Caco-2 (cell line): ENCODE measurements at regions of chr12 and their contacts with region 1.

Region 1: DNA sequence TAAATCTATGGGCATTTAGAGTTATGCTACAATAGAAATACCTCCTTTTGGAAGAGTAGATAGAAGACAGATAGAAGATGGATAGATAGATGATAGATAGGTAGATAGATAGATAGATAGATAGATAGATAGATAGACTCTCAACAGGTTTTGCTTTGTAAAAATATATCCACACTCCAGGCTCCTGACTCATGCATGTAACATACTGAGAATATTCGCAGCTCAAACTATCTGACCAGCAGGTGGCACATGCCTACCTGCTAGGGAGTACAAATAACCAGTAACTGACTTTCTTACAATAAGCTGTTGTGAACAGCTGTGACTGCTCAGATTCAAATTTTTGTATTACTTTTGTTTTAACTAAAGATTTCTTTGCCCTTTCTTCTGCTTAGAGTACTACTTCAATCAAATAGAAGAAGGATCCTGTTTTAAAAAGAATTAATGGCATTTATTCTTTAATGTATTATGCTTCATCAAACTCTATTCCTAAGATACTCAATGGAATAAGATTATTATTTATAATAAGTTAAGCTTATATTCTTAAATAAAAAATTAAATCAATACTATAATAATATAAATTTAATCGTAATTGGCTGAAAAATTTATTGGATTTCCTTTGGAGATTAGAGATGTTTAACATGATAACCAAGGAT is 15.8 kb upstream of the CPNE8 start:
- DNase-seq: peak; percentile 70
- H3K4me3 ChIP-seq: no peak overlapping the region
- H3K4me3 Mint-ChIP-seq: no peak overlapping the region
- H3K27ac Mint-ChIP-seq: no peak overlapping the region
- H3K4me1 ChIP-seq: no peaks in the 10 kb centered on the region
- H3K4me1 Mint-ChIP-seq: no peaks in the 10 kb centered on the region
- H3K27me3 ChIP-seq: no peaks in the 10 kb centered on the region
- H3K27me3 Mint-ChIP-seq: peaks cover 2% of the 10 kb centered on the region
- CTCF ChIP-seq: peak; percentile 72 to 89

Region 2: DNA sequence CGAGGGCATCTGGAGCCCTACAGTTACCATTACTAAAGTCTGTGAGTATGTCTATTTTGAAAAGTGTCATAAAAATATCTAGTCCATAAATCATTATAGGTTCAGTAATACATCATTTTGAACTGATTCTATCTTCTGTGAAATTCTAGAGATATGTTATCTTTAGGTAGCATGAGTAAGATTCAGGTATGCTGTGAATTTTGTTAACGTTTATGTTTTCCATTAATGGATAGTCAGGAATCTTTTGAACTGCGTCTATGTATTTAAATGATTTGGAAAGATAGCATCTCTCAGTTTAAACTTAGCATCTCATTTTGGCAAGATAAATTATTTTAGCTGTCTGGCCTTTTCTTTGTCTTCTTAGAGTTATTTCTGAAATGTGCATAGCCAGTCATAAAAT is 596.3 kb before region 1 on chr12:
- CTCF ChIA-PET with region 1: no interaction called
- POLR2A ChIA-PET with region 1: no interaction called
- intact Hi-C with region 1: loop called (anchors 5 kb)
- DNase-seq: peak in 1 of 2 experiments; percentile 13
- H3K4me3 ChIP-seq: no peak overlapping the region
- H3K4me3 Mint-ChIP-seq: no peak overlapping the region
- H3K27ac Mint-ChIP-seq: no peak overlapping the region
- H3K4me1 ChIP-seq: peaks cover 10% of the 10 kb centered on the region; the same call in 1 of the 2 replicates
- H3K4me1 Mint-ChIP-seq: peaks cover 9% of the 10 kb centered on the region
- H3K27me3 ChIP-seq: no peaks in the 10 kb centered on the region
- H3K27me3 Mint-ChIP-seq: no peaks in the 10 kb centered on the region
- CTCF ChIP-seq: no peak

Region 3: GRCh38 chr12:39003541-39004155 is 82.5 kb after region 1 on chr12:
- CTCF ChIA-PET with region 1: interaction called, 4 read pairs
- POLR2A ChIA-PET with region 1: no interaction called
- intact Hi-C with region 1: loop called (anchors 1 kb)
- DNase-seq: no peak
- H3K4me3 ChIP-seq: no peak overlapping the region
- H3K4me3 Mint-ChIP-seq: no peak overlapping the region
- H3K27ac Mint-ChIP-seq: no peak overlapping the region
- H3K4me1 ChIP-seq: no peaks in the 10 kb centered on the region
- H3K4me1 Mint-ChIP-seq: no peaks in the 10 kb centered on the region
- H3K27me3 ChIP-seq: no peaks in the 10 kb centered on the region
- H3K27me3 Mint-ChIP-seq: peaks cover 3% of the 10 kb centered on the region
- CTCF ChIP-seq: peak in 1 of 2 experiments; percentile 13

Region 4: DNA sequence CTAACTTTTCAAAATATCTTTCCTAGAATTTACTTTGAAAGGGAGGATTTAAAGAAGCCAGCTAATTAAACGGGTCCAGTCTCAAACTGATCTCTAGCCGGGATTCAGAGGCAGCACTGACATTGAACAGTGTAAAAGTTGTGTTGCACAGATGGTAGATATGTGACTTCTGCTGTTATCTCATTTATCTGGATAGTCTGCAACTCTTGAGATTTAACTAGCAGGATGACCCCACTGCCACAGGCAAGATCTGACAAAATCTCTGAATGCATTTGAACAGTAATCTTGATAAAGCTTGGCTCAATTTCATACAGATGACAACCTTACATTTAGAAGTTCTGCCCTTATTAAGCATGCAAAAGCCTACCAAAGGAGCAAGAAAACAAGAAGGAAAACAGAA is 122.3 kb after region 1 on chr12:
- CTCF ChIA-PET with region 1: no interaction called
- POLR2A ChIA-PET with region 1: no interaction called
- intact Hi-C with region 1: loop called (anchors 5 kb)
- DNase-seq: no peak
- H3K4me3 ChIP-seq: no peak overlapping the region
- H3K4me3 Mint-ChIP-seq: no peak overlapping the region
- H3K27ac Mint-ChIP-seq: no peak overlapping the region
- H3K4me1 ChIP-seq: 0 out of 2 replicates have a peak, but pooled peaks cover 9% of the 10 kb centered on the region
- H3K4me1 Mint-ChIP-seq: peaks cover 6% of the 10 kb centered on the region
- H3K27me3 ChIP-seq: no peaks in the 10 kb centered on the region
- H3K27me3 Mint-ChIP-seq: peaks cover 3% of the 10 kb centered on the region
- CTCF ChIP-seq: no peak

Region 5: GRCh38 chr12:39103552-39104165 is 182.5 kb after region 1 on chr12:
- CTCF ChIA-PET with region 1: interaction called, 33 read pairs
- POLR2A ChIA-PET with region 1: no interaction called
- intact Hi-C with region 1: loop called (anchors 1 kb)
- DNase-seq: peak in 1 of 2 experiments; percentile 68
- H3K4me3 ChIP-seq: no peak overlapping the region
- H3K4me3 Mint-ChIP-seq: no peak overlapping the region
- H3K27ac Mint-ChIP-seq: no peak overlapping the region
- H3K4me1 ChIP-seq: no peaks in the 10 kb centered on the region
- H3K4me1 Mint-ChIP-seq: no peaks in the 10 kb centered on the region
- H3K27me3 ChIP-seq: no peaks in the 10 kb centered on the region
- H3K27me3 Mint-ChIP-seq: peaks cover 2% of the 10 kb centered on the region
- CTCF ChIP-seq: peak; percentile 59 to 78

Region 6: DNA sequence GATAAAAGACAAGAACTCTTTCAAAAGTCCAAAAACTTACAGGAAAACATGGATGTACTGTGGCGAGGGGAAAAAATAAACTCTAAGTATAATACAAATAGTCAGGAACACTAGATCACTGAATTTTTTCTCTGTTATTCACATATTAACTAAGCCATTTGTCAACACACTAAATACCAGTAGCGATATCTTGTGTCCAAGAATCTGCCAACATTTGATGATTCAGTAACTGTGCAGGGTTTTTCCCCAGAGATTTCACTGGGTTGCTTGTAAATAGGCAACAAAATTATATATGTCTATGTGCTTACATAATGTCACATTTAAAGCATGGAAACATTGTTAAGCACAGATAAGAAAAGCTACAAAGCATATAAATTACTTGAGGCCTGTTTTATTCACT is 315.9 kb after region 1 on chr12:
- CTCF ChIA-PET with region 1: no interaction called
- POLR2A ChIA-PET with region 1: no interaction called
- intact Hi-C with region 1: no loop called
- DNase-seq: peak in 1 of 2 experiments; percentile 49
- H3K4me3 ChIP-seq: no peak overlapping the region
- H3K4me3 Mint-ChIP-seq: no peak overlapping the region
- H3K27ac Mint-ChIP-seq: no peak overlapping the region
- H3K4me1 ChIP-seq: peaks cover 52% of the 10 kb centered on the region
- H3K4me1 Mint-ChIP-seq: peaks cover 29% of the 10 kb centered on the region
- H3K27me3 ChIP-seq: no peaks in the 10 kb centered on the region
- H3K27me3 Mint-ChIP-seq: no peaks in the 10 kb centered on the region
- CTCF ChIP-seq: no peak